Activated CD4-positive, alpha-beta T cell treated with anti-CD3 and anti-CD28 coated beads, Interleukin-2, amount 10 ng/mL, durations not matched to agents 7 days and 5 days (primary cell): ENCODE measurements at regions of chr12 and their contacts with region 1.

Region 1: DNA sequence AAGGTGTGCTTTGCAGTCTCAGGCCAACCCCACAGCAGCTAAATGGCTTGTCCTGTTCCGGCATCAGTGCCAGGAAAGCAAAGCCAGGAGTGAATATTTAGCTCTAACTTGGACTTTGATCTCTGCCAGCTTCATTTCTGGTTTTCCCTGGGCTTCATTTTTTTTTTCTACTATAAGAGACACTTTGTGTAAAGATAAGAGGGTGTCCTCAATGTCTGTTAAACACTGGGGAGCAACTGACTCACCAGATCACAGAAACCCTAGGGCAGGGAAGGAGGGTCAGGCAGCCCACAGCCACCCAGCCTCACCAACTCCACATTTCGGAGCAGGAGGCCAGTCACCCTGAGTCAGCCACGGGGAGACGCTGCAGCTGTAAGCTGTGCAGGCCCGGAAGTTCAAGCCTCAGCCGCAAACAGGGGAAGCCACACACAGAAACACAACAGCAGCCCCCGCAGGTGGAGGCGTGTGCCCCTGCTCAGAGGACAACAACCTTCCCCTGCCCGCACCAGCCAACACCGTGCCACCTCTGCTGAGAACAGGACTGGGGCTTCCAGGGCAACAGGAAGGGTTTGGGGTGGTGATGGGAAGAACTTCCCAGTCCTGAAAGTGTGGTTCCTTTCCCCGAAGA is 6.3 kb downstream of the TNFRSF1A start:
- DNase-seq: peak; percentile 89
- H3K4me3 Mint-ChIP-seq: no peak overlapping the region
- H3K27ac Mint-ChIP-seq: no peak overlapping the region
- H3K4me1 Mint-ChIP-seq: peaks cover 44% of the 10 kb centered on the region
- H3K27me3 Mint-ChIP-seq: no peaks in the 10 kb centered on the region

Region 2: DNA sequence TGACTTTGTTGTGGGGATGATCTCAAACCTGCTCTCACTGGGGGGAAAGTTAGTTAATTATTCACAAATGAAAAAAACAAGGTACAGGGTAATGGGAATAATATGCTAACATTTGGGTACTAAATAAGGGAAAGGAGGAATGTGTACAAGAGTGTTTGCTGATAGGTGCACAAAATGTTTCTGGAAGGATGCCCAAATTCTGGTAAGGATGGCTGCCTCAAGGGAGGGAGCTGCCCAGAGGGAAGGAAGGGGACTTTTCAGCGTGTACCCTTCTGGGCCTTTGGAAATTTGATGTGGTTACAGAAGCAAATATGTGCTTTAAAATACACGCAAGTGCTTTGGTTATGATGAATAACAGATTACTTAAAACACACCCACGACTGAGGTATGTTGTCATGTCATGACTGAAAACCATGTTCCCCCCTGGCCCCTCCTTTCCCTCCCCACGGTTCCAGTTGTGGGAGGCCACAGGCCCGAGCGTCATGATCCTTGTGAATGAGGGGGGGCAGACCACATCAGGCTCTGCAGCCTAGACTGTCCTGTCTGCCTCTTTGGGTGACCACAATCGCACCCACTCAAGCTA is 68.3 kb before region 1 on chr12:
- CTCF ChIA-PET with region 1: no interaction called
- POLR2A ChIA-PET with region 1: no interaction called
- DNase-seq: no peak
- H3K4me3 Mint-ChIP-seq: no peak overlapping the region
- H3K27ac Mint-ChIP-seq: no peak overlapping the region
- H3K4me1 Mint-ChIP-seq: peaks cover 1% of the 10 kb centered on the region
- H3K27me3 Mint-ChIP-seq: peaks cover 3% of the 10 kb centered on the region

Region 3: DNA sequence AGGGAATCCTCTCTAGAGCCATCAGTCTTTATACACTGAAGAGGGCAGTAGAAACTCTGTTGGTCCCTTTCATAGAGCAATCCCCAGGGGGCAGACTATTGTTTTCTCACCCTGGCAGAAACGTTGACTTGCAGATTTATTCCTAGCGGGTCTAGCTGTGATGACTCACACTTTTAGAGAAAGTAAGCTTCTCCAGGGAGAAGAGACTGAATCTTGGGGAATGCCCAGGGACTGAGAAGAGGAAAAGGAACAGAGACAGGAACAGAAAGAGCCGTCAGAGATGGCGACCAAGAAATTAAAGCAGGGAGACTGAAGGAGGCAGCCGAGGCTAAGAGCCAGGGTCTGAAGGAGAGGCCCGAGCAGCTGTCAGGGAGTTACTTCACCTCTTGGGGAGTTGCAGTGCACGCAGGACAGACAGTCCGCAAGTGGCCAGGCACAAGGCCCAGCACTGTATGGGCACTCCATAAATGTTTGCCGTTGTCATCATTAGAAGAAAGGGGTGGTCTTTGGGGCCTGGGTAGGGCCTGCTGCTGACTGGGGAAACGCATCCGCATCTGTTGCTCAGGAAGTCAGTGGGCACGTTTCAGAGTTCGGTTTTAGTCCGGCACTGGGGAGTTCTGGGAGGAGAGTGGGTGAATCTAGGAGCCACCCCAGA is 12.1 kb before region 1 on chr12:
- CTCF ChIA-PET with region 1: interaction called, 21 read pairs
- POLR2A ChIA-PET with region 1: no interaction called
- DNase-seq: peak; percentile 49
- H3K4me3 Mint-ChIP-seq: peak overlapping the region; percentile 37
- H3K27ac Mint-ChIP-seq: peak overlapping the region; percentile 88
- H3K4me1 Mint-ChIP-seq: peaks cover 39% of the 10 kb centered on the region
- H3K27me3 Mint-ChIP-seq: peaks cover 3% of the 10 kb centered on the region

Region 4: GRCh38 chr12:6383572-6384498 is 48.3 kb after region 1 on chr12 and contains the start of gene LTBR:
- CTCF ChIA-PET with region 1: no interaction called
- POLR2A ChIA-PET with region 1: no interaction called
- DNase-seq: no peak
- H3K4me3 Mint-ChIP-seq: no peak within 1 kb of the TSS
- H3K27ac Mint-ChIP-seq: no peak within 1 kb of the TSS
- H3K4me1 Mint-ChIP-seq: no peaks in the 10 kb centered on the region
- H3K27me3 Mint-ChIP-seq: peaks cover 34% of the 10 kb centered on the region
- total RNA-seq, gene LTBR: not detected